Right ventricle myocardium inferior (tissue), 1 donor: ENCODE measurements at regions of chr20 and their contacts with region 1.

Region 1: DNA sequence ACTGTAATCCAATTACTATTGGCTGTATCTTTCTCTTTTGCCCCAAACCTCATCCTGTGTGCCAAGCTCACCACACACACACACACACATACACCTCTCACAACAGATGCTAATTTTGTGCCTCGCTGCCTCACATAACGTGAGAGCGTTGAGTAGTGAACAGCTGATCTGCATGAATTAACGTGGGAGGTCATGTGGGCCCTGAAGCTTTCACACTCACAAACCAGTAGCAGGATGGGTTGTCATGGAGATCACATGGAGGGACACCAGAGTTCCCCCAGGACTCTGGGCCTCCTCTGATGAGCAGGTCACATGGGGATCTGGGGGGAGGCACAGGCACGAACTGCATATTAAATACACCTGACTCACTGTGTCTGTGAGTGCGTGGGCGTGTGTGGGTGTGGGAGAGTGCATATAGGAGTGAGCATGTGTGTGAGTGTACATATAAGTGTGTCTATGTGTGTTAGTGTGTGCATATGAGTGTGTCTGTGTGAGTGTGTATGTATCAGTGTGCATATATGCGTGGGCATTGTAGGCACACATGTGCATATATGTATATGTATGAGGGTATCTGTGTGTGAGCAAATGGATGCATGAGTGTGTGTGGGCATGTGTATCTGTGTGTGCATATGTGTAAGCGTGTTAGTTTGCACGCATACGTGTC is 62.7 kb upstream of the SULF2 start:
- DNase-seq: no peak
- ATAC-seq: no peak

Region 2: DNA sequence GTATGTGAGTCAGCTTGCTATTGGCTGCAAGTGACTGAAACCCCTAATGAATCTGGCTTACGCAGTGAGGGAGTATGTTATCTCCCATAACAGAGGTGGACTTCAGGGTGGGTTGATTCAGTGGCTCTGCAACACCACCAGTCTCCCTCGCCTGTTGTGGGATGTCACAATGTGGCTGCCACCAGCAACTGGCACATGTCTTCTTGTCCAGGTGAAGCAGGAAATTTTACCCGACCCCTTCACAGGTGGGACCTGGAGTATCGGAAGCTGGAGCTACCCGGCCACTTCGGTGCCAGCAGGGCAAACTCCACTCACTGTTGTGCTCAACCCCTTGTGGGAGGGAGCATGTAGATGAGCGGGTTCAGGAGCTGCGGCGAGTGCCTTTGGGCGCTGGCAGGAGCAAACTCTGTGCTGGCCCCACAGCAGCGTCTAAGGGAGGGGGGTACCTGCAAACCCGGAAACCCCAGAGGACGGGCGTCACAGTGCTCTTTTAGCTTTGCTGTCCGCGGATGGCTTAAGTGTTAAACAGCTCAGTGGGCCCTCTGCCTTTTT is 42.1 kb before region 1 on chr20:
- intact Hi-C with region 1: loop called (anchors 2 kb)
- DNase-seq: peak; percentile 59
- ATAC-seq: no peak

Region 3: DNA sequence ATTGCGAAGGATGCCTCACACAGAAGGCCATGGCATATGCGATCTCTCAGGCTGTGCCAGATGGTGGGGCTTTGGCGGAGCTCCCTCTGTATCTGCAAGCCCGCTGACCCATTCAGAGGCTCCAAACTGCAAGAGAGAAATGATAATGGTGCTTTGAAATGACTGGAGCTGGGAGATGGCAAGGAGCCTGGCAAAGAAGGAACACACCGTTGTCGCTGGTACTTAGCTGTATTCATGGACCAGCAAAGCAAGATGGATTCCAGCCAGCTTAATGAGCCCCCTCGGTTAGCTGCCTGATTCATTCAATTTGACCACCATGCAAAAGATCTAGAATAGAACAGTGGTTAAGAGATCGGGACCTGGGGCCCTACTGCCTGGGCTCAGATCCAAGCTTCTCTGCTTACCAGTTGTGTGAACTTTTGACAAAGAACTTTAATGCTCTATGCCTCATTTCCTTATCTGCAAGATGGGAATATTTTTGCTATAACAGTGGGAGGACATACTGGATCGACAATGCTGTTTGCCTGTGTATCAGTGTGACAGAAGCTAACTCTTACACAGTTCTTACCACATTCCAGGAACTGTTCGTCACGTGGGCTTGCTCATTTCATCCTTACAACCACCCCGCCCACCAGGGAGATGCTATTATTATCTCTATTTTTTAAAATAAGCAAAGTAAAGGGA is 255.1 kb after region 1 on chr20:
- intact Hi-C with region 1: no loop called
- DNase-seq: no peak
- ATAC-seq: no peak